SK-MEL-5 (cell line): ENCODE measurements at regions of chr1 and their contacts with region 1.

Region 1: GRCh38 chr1:46477153-46477929 is 12.3 kb upstream of the DMBX1 start:
- DNase-seq: peak; percentile 69

Region 2: GRCh38 chr1:46527474-46528296 is 50.3 kb after region 1 on chr1:
- in situ Hi-C with region 1: loop called (anchors 10 kb)
- DNase-seq: peak; percentile 73